Right lobe of liver (tissue), 6 donors: ENCODE measurements at regions of chr11 and their contacts with region 1.

Region 1: DNA sequence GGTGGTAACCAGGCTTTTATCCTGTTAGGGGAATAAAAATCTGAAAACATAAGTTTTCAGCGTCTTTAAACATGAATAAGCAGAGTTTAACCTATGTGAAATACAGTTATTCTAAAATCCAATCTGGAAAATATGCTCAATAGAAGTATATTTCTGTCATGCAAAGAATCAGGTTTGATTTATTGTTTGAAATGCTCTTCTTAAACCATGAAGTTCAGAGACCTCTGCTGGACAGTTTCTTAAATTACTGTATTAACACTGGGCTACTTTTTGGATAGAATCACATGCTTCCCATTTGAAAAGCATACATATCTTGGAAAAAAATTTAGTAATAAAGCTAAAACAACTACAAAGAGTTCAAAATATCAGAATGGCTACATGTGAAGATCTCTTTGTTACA is 25.4 kb downstream of the APIP start:
- DNase-seq: no peak
- ATAC-seq: peak; percentile 66 to 81 (median 74)
- H3K4me3 ChIP-seq: no peak overlapping the region
- H3K27ac ChIP-seq: no peak overlapping the region
- H3K4me1 ChIP-seq: peaks cover 0 to 7% (median 3%) of the 10 kb centered on the region in 4 donors
- H3K27me3 ChIP-seq: no peaks in the 10 kb centered on the region
- CTCF ChIP-seq: peak; percentile 38 to 60 (median 55)
- POLR2A ChIP-seq: no peak

Region 2: DNA sequence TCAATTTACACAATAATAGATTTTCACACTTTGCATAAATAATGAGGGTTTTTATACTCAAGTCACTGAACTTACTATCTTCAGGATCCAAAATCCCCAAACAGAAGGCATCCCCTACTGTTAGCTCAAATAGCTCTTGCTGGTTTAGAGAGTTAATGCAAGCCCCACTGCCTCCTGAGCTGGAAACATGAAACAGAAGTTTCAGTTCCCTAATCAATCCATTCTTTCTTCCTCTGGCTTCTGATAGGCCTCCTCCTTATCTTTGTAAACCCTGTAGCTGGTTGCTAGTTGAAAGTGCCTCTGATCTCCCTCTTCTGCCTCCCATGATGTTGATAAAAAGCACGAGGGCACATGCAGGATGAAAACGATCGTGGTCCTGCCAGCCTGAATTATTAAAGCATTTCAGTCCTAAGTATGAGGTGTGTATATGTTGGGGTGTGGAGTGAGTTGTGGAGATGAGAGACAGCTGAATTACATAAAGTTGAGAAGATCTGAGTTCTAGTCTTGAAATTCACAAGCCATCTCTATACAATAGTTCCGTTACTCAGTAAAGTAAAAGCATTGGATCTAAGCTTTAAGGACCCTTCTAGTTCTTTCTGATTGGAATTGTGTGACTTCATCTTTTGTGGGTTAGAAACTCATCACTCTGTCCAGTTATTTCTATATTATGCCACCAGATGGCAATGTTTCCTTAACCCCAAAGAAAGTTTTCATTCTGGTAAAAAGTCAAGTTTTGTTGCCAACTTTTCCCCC is 304.9 kb before region 1 on chr11:
- intact Hi-C with region 1: loop called in 1 of 2 experiments (anchors 10 kb)
- DNase-seq: no peak
- ATAC-seq: peak; percentile 57 to 69 (median 67)
- H3K4me3 ChIP-seq: no peak overlapping the region
- H3K27ac ChIP-seq: peak overlapping the region in 1 of 3 donors; percentile 20
- H3K4me1 ChIP-seq: peaks cover 0 to 22% (median 0%) of the 10 kb centered on the region in 4 donors
- H3K27me3 ChIP-seq: no peaks in the 10 kb centered on the region
- CTCF ChIP-seq: peak; percentile 66 to 78 (median 72)
- POLR2A ChIP-seq: no peak

Region 3: GRCh38 chr11:34940026-34940677 is 49.3 kb after region 1 on chr11:
- intact Hi-C with region 1: no loop called
- DNase-seq: no peak
- ATAC-seq: no peak
- H3K4me3 ChIP-seq: no peak overlapping the region
- H3K27ac ChIP-seq: no peak overlapping the region
- H3K4me1 ChIP-seq: no peaks in the 10 kb centered on the region
- H3K27me3 ChIP-seq: no peaks in the 10 kb centered on the region
- CTCF ChIP-seq: no peak
- POLR2A ChIP-seq: no peak